Activated B cell treated with CpG ODN at 0.5 μM for 24 hours (primary cell): ENCODE measurements at regions of chr9 and their contacts with region 1.

Region 1: DNA sequence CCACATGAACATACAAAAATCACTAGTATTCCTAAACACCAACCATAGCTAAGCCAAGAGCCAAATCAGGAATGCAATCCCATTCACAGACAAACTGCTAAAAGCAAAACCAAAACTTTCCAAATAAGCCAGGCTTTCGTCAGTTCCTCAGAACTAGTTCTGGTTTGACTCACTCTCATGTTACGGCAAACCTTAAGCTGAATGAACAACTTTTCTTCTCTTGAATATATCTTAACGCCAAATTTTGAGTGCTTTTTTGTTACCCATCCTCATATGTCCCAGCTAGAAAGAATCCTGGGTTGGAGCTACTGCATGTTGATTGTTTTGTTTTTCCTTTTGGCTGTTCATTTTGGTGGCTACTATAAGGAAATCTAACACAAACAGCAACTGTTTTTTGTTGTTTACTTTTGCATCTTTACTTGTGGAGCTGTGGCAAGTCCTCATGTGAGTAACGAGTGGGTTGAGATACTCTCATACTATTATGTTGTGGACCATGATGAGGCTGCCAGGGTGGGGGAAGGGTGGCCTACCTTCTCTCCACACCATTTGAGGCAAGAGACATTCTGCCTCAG is at the start of gene PDCD1LG2:
- DNase-seq: no peak
- ATAC-seq: peak; percentile 79
- H3K4me3 Mint-ChIP-seq: peak within 1 kb of the TSS; percentile 77
- H3K27ac Mint-ChIP-seq: peak within 1 kb of the TSS; percentile 89
- H3K4me1 Mint-ChIP-seq: peaks cover 55% of the 10 kb centered on the region
- H3K27me3 Mint-ChIP-seq: no peaks in the 10 kb centered on the region
- CTCF ChIP-seq: no peak
- total RNA-seq, gene PDCD1LG2: 2.1 and 2.8 TPM in 2 replicates

Region 2: DNA sequence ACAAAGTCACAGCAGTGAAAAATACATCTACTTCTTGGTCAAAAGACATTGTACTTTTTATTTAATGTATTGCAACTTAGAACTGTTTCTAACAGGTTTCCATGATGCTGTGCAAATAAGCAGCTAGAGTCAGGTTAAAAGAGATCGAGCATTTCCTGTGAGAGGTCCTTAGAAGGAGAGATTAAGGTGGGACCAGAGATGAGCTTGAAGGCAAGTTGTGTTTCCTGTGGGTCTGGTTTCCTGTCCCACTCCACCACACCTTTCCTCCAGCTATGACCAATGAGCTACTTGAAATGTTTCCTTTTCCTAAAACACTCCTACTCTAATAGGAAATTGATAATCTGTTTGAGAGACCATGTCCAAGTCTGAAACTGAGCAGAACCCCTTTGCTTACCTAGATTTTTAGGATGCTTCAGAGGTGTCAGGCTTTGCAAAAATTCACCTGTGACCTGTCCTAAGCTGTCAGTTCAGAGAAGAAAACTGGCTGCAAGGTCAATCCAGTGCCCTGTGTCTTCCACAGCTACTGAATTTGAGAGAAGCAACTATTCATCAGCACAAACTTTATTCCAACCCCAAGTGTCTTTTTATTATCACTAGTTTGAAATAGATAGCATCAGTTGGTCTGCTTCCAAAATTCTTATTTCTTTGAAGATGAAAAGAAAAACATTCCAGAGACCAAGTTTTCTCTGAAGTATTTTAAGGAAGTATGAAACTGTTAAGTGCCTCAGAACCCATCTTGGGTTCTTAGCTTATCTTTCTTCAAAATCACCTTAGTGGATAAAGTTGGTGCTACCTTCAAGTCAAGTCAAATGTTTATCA is 157.6 kb before region 1 on chr9:
- CTCF ChIA-PET with region 1: no interaction called
- POLR2A ChIA-PET with region 1: no interaction called
- intact Hi-C with region 1: no loop called
- DNase-seq: no peak
- ATAC-seq: no peak
- H3K4me3 Mint-ChIP-seq: no peak overlapping the region
- H3K27ac Mint-ChIP-seq: no peak overlapping the region
- H3K4me1 Mint-ChIP-seq: peaks cover 8% of the 10 kb centered on the region
- H3K27me3 Mint-ChIP-seq: no peaks in the 10 kb centered on the region
- CTCF ChIP-seq: no peak

Region 3: GRCh38 chr9:5479994-5480694 is 30.3 kb before region 1 on chr9:
- CTCF ChIA-PET with region 1: no interaction called
- POLR2A ChIA-PET with region 1: interaction called, 3 read pairs
- intact Hi-C with region 1: loop called (anchors 2 kb)
- DNase-seq: no peak
- ATAC-seq: no peak
- H3K4me3 Mint-ChIP-seq: no peak overlapping the region
- H3K27ac Mint-ChIP-seq: no peak overlapping the region
- H3K4me1 Mint-ChIP-seq: peaks cover 33% of the 10 kb centered on the region
- H3K27me3 Mint-ChIP-seq: no peaks in the 10 kb centered on the region
- CTCF ChIP-seq: no peak

Region 4: GRCh38 chr9:5493679-5494511 is 16.6 kb before region 1 on chr9:
- CTCF ChIA-PET with region 1: no interaction called
- POLR2A ChIA-PET with region 1: no interaction called
- intact Hi-C with region 1: loop called (anchors 1 kb)
- DNase-seq: no peak
- ATAC-seq: peak; percentile 78
- H3K4me3 Mint-ChIP-seq: peak overlapping the region; percentile 3
- H3K27ac Mint-ChIP-seq: peak overlapping the region; percentile 54
- H3K4me1 Mint-ChIP-seq: peaks cover 17% of the 10 kb centered on the region
- H3K27me3 Mint-ChIP-seq: no peaks in the 10 kb centered on the region
- CTCF ChIP-seq: no peak

Region 5: GRCh38 chr9:5529683-5530221 is 19.3 kb after region 1 on chr9:
- CTCF ChIA-PET with region 1: no interaction called
- POLR2A ChIA-PET with region 1: interaction called, 25 read pairs
- intact Hi-C with region 1: loop called (anchors 1 kb)
- DNase-seq: no peak
- ATAC-seq: peak; percentile 57
- H3K4me3 Mint-ChIP-seq: peak overlapping the region; percentile 60
- H3K27ac Mint-ChIP-seq: peak overlapping the region; percentile 51
- H3K4me1 Mint-ChIP-seq: peaks cover 57% of the 10 kb centered on the region
- H3K27me3 Mint-ChIP-seq: no peaks in the 10 kb centered on the region
- CTCF ChIP-seq: no peak

Region 6: GRCh38 chr9:5557606-5558587 is 47.5 kb after region 1 on chr9:
- CTCF ChIA-PET with region 1: no interaction called
- POLR2A ChIA-PET with region 1: no interaction called
- intact Hi-C with region 1: loop called (anchors 5 kb)
- DNase-seq: peak; percentile 20
- ATAC-seq: peak; percentile 83
- H3K4me3 Mint-ChIP-seq: peak overlapping the region; percentile 50
- H3K27ac Mint-ChIP-seq: peak overlapping the region; percentile 75
- H3K4me1 Mint-ChIP-seq: peaks cover 55% of the 10 kb centered on the region
- H3K27me3 Mint-ChIP-seq: no peaks in the 10 kb centered on the region
- CTCF ChIP-seq: no peak